Activated B cell treated with CpG ODN at 0.5 μM for 24 hours (primary cell): ENCODE measurements at regions of chr3 and their contacts with region 1.

Region 1: GRCh38 chr3:169966428-169966950 is at the start of gene SEC62:
- DNase-seq: peak; percentile 94
- ATAC-seq: peak; percentile 86
- H3K4me3 Mint-ChIP-seq: peak within 1 kb of the TSS; percentile 99
- H3K27ac Mint-ChIP-seq: peak within 1 kb of the TSS; percentile 99
- H3K4me1 Mint-ChIP-seq: peaks cover 87% of the 10 kb centered on the region
- H3K27me3 Mint-ChIP-seq: no peaks in the 10 kb centered on the region
- CTCF ChIP-seq: no peak
- total RNA-seq, gene SEC62: 140 and 165 TPM in 2 replicates

Region 2: GRCh38 chr3:169945313-169945712 is 21.2 kb before region 1 on chr3:
- CTCF ChIA-PET with region 1: interaction called, 29 read pairs
- POLR2A ChIA-PET with region 1: interaction called, 305 read pairs
- intact Hi-C with region 1: loop called (anchors 1 kb)
- DNase-seq: peak; percentile 54
- ATAC-seq: peak; percentile 91
- H3K4me3 Mint-ChIP-seq: peak overlapping the region; percentile 68
- H3K27ac Mint-ChIP-seq: peak overlapping the region; percentile 93
- H3K4me1 Mint-ChIP-seq: peaks cover 93% of the 10 kb centered on the region
- H3K27me3 Mint-ChIP-seq: no peaks in the 10 kb centered on the region
- CTCF ChIP-seq: no peak

Region 3: GRCh38 chr3:169954142-169954756 is 12.2 kb before region 1 on chr3:
- CTCF ChIA-PET with region 1: interaction called, 29 read pairs
- POLR2A ChIA-PET with region 1: interaction called, 305 read pairs
- intact Hi-C with region 1: loop called (anchors 1 kb)
- DNase-seq: no peak
- ATAC-seq: peak; percentile 87
- H3K4me3 Mint-ChIP-seq: peak overlapping the region; percentile 69
- H3K27ac Mint-ChIP-seq: peak overlapping the region; percentile 92
- H3K4me1 Mint-ChIP-seq: peaks cover 61% of the 10 kb centered on the region
- H3K27me3 Mint-ChIP-seq: no peaks in the 10 kb centered on the region
- CTCF ChIP-seq: no peak

Region 4: GRCh38 chr3:169980055-169980454 is 13.6 kb after region 1 on chr3:
- CTCF ChIA-PET with region 1: interaction called, 5 read pairs
- POLR2A ChIA-PET with region 1: interaction called, 26 read pairs
- intact Hi-C with region 1: no loop called
- DNase-seq: no peak
- ATAC-seq: no peak
- H3K4me3 Mint-ChIP-seq: no peak overlapping the region
- H3K27ac Mint-ChIP-seq: peak overlapping the region; percentile 10
- H3K4me1 Mint-ChIP-seq: peaks cover 51% of the 10 kb centered on the region
- H3K27me3 Mint-ChIP-seq: no peaks in the 10 kb centered on the region
- CTCF ChIP-seq: no peak

Region 5: DNA sequence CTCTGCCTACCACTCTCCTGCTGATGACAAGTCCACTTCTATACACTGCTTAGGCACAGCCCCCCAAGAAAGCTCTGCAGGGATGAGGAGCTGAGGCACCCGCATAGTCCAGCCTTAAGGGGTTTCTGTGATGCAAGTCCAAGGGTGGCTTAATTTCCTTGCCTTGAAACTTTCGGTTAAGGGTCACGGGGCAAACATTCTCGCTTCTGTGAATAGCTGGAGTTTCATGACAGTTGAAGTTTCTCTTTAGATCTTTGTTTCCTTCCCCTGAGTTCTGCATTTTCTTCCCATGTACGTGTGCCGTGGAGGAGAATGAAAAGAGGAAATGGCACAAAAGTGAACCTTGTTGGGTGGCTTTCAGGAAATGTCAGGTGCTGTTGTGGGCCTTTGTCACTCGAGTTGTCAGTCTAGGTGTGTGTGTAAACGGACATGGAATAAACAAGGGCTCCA is 78.3 kb after region 1 on chr3:
- CTCF ChIA-PET with region 1: no interaction called
- POLR2A ChIA-PET with region 1: interaction called, 18 read pairs
- intact Hi-C with region 1: no loop called
- DNase-seq: peak; percentile 45
- ATAC-seq: peak; percentile 77
- H3K4me3 Mint-ChIP-seq: peak overlapping the region; percentile 64
- H3K27ac Mint-ChIP-seq: peak overlapping the region; percentile 87
- H3K4me1 Mint-ChIP-seq: peaks cover 65% of the 10 kb centered on the region
- H3K27me3 Mint-ChIP-seq: no peaks in the 10 kb centered on the region
- CTCF ChIP-seq: no peak

Region 6: GRCh38 chr3:170221924-170222646 is 255.6 kb after region 1 on chr3 and contains the start of gene PRKCI:
- CTCF ChIA-PET with region 1: no interaction called
- POLR2A ChIA-PET with region 1: no interaction called
- intact Hi-C with region 1: no loop called
- DNase-seq: peak; percentile 64
- ATAC-seq: peak; percentile 94
- H3K4me3 Mint-ChIP-seq: peak within 1 kb of the TSS; percentile 95
- H3K27ac Mint-ChIP-seq: peak within 1 kb of the TSS; percentile 73
- H3K4me1 Mint-ChIP-seq: peaks cover 14% of the 10 kb centered on the region
- H3K27me3 Mint-ChIP-seq: no peaks in the 10 kb centered on the region
- CTCF ChIP-seq: no peak
- total RNA-seq, gene PRKCI: 6.6 and 6.9 TPM in 2 replicates